ENCODE measurements at regions of chr15 and their contacts with region 1.

Region 1: DNA sequence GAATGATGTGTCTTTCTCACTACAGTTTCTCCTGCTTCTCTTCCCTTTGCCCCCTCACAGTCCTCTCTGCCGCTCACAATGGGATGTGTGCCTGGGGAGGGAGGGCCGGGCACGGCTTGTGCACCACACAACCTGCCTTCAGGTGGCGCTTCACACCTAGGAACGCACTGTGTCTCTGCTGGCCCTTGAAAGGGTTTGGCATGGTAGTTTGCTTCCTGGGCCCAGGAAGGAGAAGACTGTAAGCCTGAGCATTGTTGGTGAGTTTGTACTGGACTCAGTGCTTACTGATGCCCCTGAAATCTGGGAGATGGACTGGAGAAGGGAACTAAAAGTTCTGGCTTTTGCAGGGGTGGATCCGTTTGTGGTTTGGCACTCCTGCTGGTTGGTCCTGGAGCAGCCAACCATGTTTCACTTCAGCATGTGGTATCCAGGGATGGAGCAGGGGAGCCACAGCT is 9.2 kb downstream of the ALPK3 start:
- DNase-seq: no peak
- H3K4me3 Mint-ChIP-seq: no peak overlapping the region
- H3K27ac Mint-ChIP-seq: no peak overlapping the region
- H3K4me1 Mint-ChIP-seq: no peaks in the 10 kb centered on the region
- H3K27me3 Mint-ChIP-seq: peaks cover 14% of the 10 kb centered on the region

Region 2: GRCh38 chr15:84871428-84872305 is 45.3 kb after region 1 on chr15:
- intact Hi-C with region 1: loop called (anchors 10 kb)
- DNase-seq: no peak
- H3K4me3 Mint-ChIP-seq: no peak overlapping the region
- H3K27ac Mint-ChIP-seq: no peak overlapping the region
- H3K4me1 Mint-ChIP-seq: no peaks in the 10 kb centered on the region
- H3K27me3 Mint-ChIP-seq: no peaks in the 10 kb centered on the region

Measured in activated CD4-positive, alpha-beta T cell treated with anti-CD3 and anti-CD28 coated beads, Interleukin-2, amount 10 ng/mL, durations not matched to agents 24 days and 14 days (primary cell).